ENCODE measurements at regions of chr9 and their contacts with region 1.

Region 1: DNA sequence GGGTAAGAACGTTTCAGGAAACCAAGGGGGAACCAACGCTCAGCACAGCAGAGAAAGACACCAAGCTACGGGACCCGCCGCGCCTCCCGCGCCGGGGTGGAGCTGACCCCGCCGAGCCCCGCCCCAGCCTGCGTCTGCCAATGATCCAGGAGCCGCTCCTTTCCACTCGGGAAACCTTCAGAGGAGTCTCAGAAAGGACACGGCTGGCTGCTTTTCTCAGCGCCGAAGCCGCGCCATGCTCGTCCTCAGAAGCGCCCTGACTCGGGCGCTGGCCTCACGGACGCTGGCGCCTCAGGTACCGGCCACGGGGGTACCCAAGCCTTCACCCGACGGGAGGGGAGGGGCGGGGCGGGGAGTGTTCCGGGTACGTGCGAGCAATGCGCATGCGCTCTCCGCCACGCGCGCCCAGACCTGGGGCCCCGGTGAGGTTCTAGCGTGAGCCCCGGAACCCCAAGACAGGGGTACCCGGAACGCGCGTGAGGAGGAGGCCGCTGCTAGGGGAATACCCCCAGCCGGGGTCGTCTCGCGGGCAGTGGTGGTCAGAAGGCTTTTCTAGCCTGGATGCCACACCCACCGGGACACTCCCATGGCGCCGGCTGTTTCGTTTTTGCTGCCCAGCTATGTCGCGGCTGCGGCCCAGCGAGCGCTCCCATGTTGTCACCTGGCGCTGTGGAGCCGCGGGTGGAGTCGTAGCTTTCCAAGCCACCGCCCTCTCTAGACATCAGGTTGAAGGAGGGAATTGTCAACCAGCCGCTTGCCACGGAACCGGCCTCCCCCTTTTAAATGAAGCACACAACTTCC is at the start of gene NIPSNAP3A:
- DNase-seq: peak; percentile 91
- ATAC-seq: peak; percentile 89
- H3K4me3 Mint-ChIP-seq: peak within 1 kb of the TSS; percentile 99
- H3K27ac Mint-ChIP-seq: peak within 1 kb of the TSS; percentile 99
- H3K4me1 Mint-ChIP-seq: peaks cover 34% of the 10 kb centered on the region
- H3K27me3 Mint-ChIP-seq: no peaks in the 10 kb centered on the region
- CTCF ChIP-seq: no peak
- total RNA-seq, gene NIPSNAP3A: 21.9 and 22.7 TPM in 2 replicates

Region 2: DNA sequence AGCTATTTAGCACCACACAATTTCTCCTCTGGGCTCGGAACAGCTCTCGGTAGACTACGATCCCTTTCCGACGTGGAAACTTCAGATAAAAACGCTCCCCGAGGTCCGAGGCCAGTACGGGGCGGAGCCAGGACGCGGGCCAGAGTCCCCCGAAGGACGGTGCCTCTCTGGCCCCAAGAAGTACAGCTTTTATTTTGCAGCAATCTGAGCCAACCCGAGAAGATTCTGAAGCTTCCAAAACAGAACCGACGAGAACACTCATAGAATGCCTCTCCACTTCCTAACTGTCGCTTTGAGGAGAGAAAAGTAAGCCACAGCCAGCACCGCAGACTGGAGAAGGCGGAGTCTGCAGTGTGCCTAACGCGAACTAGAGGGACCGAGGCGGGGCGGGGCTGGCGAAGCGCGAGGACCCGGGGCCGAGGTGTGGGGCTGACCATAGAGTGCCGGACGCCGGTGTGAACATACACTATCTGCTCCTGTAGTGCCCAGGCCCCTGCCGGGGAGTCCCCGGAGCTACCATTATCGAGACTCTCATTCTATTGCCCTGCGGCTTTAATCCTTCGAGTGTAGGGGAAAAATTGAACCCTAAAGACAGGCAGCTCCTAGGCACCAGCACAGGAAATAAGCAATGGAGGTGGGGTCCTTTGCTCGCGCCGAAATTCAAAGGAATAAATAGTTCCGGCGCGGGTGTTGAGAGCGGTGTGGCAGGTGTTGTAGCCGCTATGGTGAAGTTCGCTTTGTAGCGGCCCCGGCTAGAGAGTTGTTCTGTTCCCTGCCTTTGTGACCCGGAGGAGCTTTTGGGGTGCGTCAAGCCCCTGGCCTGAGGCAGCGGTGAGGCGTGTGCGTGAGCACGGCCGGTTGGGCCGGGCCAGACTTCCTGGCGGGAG is 653.9 kb before region 1 on chr9 and contains the start of gene SMC2:
- CTCF ChIA-PET with region 1: interaction called, 4 read pairs
- POLR2A ChIA-PET with region 1: interaction called, 9 read pairs
- intact Hi-C with region 1: loop called (anchors 1 kb)
- DNase-seq: peak; percentile 90
- ATAC-seq: peak; percentile 97
- H3K4me3 Mint-ChIP-seq: peak within 1 kb of the TSS; percentile 99
- H3K27ac Mint-ChIP-seq: peak within 1 kb of the TSS; percentile 99
- H3K4me1 Mint-ChIP-seq: peaks cover 31% of the 10 kb centered on the region
- H3K27me3 Mint-ChIP-seq: no peaks in the 10 kb centered on the region
- CTCF ChIP-seq: no peak
- total RNA-seq, gene SMC2: 12.5 and 13.5 TPM in 2 replicates

Region 3: DNA sequence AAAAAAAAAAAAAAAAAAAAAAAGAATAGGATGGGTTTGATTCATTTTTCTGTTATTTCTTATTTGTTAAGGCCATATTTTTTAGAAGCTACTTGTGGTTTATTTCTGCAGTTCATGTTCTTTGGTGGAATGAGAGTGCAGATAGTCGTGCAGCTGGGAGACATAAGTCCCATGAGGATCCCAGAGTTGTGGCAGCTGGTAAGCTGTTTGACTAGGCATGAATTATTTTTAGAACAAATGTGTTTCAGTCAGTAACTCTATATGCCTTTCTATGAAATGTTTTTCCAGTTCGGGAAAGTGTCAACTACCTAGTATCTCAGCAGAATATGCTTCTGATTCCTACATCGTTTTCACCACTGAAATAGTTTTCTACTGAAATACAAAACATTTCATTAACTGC is 11.2 kb after region 1 on chr9:
- CTCF ChIA-PET with region 1: interaction called, 6 read pairs
- POLR2A ChIA-PET with region 1: interaction called, 83 read pairs
- intact Hi-C with region 1: loop called (anchors 1 kb)
- DNase-seq: no peak
- ATAC-seq: peak; percentile 40
- H3K4me3 Mint-ChIP-seq: no peak overlapping the region
- H3K27ac Mint-ChIP-seq: peak overlapping the region; percentile 25
- H3K4me1 Mint-ChIP-seq: peaks cover 16% of the 10 kb centered on the region
- H3K27me3 Mint-ChIP-seq: no peaks in the 10 kb centered on the region
- CTCF ChIP-seq: no peak

Region 4: GRCh38 chr9:104780799-104781395 is 33.1 kb after region 1 on chr9:
- CTCF ChIA-PET with region 1: interaction called, 5 read pairs
- POLR2A ChIA-PET with region 1: interaction called, 36 read pairs
- intact Hi-C with region 1: loop called (anchors 2 kb)
- DNase-seq: no peak
- ATAC-seq: peak; percentile 47
- H3K4me3 Mint-ChIP-seq: no peak overlapping the region
- H3K27ac Mint-ChIP-seq: peak overlapping the region; percentile 65
- H3K4me1 Mint-ChIP-seq: peaks cover 34% of the 10 kb centered on the region
- H3K27me3 Mint-ChIP-seq: no peaks in the 10 kb centered on the region
- CTCF ChIP-seq: peak; percentile 27

Region 5: DNA sequence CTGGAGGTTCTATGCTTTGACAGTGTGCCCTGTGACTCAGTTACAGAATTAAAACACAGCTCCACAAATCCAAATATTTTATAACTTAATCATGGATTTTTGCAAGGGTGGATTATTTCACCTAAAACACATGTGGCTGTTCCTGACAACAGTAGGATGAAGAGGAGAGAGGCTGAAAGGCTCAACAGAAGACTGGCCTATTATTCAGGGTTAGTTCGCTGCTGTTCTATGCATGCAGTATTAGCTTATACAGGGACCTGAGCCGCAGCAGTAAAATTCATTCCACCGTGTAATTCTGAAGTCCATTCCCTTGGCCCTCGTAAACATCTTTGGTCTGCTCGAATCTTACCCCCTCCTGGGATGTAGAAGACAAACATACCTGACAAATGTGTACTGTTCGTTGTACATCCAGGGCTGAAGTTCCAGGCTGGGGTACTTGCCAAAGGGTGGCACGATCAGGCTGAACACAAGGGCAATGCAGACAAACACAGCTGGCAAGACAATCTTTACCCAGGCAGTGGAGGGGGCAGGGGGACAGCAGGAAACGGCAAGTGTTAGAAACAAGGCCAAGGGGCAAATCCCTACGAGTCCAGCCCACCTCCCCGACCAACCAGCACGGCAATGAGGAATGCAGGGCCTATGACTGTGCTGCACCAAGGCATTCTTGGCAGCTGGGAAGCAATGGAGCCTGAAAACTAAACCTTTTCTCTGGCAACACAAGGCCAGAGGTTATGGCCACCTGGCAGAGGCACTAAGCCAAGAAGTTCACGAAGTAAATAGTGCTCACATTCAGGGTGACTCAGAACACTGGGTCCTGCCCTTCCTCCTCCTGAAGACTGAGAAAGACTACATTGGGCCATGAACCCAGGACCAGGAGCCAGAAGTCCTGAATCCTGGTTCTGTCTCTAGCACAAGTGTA is 62.9 kb after region 1 on chr9:
- CTCF ChIA-PET with region 1: no interaction called
- POLR2A ChIA-PET with region 1: no interaction called
- intact Hi-C with region 1: no loop called
- DNase-seq: no peak
- ATAC-seq: no peak
- H3K4me3 Mint-ChIP-seq: no peak overlapping the region
- H3K27ac Mint-ChIP-seq: no peak overlapping the region
- H3K4me1 Mint-ChIP-seq: no peaks in the 10 kb centered on the region
- H3K27me3 Mint-ChIP-seq: no peaks in the 10 kb centered on the region
- CTCF ChIP-seq: no peak

Region 6: GRCh38 chr9:104927912-104928740 is 180.4 kb after region 1 on chr9 and contains the start of gene ABCA1:
- CTCF ChIA-PET with region 1: no interaction called
- POLR2A ChIA-PET with region 1: interaction called, 3 read pairs
- intact Hi-C with region 1: loop called (anchors 5 kb)
- DNase-seq: peak; percentile 64
- ATAC-seq: peak; percentile 73
- H3K4me3 Mint-ChIP-seq: peak within 1 kb of the TSS; percentile 93
- H3K27ac Mint-ChIP-seq: peak within 1 kb of the TSS; percentile 68
- H3K4me1 Mint-ChIP-seq: peaks cover 42% of the 10 kb centered on the region
- H3K27me3 Mint-ChIP-seq: no peaks in the 10 kb centered on the region
- CTCF ChIP-seq: no peak
- total RNA-seq, gene ABCA1: 1.7 and 2.3 TPM in 2 replicates

Region 7: GRCh38 chr9:105414947-105415661 is 667.3 kb after region 1 on chr9:
- CTCF ChIA-PET with region 1: interaction called, 9 read pairs
- POLR2A ChIA-PET with region 1: no interaction called
- intact Hi-C with region 1: loop called (anchors 1 kb)
- DNase-seq: peak; percentile 18
- ATAC-seq: peak; percentile 85
- H3K4me3 Mint-ChIP-seq: no peak overlapping the region
- H3K27ac Mint-ChIP-seq: no peak overlapping the region
- H3K4me1 Mint-ChIP-seq: peaks cover 4% of the 10 kb centered on the region
- H3K27me3 Mint-ChIP-seq: no peaks in the 10 kb centered on the region
- CTCF ChIP-seq: no peak

Region 8: DNA sequence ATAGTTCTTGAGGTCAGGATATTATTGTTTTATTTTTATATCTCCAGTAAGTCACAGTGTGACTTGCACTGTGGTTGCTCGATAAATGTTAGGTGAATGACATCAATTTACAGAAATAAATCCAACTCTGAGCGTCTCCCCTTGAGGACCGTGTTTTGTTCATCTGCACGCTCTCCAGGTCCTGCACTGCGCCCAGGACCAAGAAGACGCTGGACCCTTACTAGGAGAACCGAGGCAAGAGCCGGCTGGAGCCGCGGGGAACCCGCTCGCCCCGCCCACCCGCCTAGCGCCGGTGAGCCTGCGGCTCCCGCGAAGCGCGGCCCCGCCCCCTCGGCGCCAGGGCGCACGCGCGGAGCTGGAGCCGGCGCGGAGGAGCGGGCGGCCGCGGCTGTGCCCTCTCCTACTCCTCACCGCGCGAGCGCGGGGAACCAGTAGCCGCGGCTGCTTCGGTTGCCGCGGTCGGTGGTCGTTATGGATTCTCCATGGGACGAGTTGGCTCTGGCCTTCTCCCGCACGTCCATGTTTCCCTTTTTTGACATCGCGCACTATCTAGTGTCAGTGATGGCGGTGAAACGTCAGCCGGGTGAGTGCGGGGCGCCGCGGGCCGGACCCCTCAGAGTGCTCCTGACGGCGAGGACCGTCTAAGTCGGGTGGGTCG is 946.6 kb after region 1 on chr9 and contains the start of gene TMEM38B:
- CTCF ChIA-PET with region 1: no interaction called
- POLR2A ChIA-PET with region 1: no interaction called
- intact Hi-C with region 1: loop called (anchors 2 kb)
- DNase-seq: peak; percentile 85
- ATAC-seq: peak; percentile 80
- H3K4me3 Mint-ChIP-seq: peak within 1 kb of the TSS; percentile 89
- H3K27ac Mint-ChIP-seq: peak within 1 kb of the TSS; percentile 84
- H3K4me1 Mint-ChIP-seq: peaks cover 23% of the 10 kb centered on the region
- H3K27me3 Mint-ChIP-seq: peaks cover 19% of the 10 kb centered on the region
- CTCF ChIP-seq: no peak
- total RNA-seq, gene TMEM38B: 10.9 and 12.7 TPM in 2 replicates